ENCODE measurements at regions of chr16 and their contacts with region 1.

Region 1: GRCh38 chr16:82242201-82242600 is 72.2 kb upstream of the MPHOSPH6 start:
- DNase-seq: no peak
- H3K4me3 Mint-ChIP-seq: no peak overlapping the region
- H3K27ac Mint-ChIP-seq: no peak overlapping the region
- H3K4me1 Mint-ChIP-seq: no peaks in the 10 kb centered on the region
- H3K27me3 Mint-ChIP-seq: peaks cover 31% of the 10 kb centered on the region

Region 2: GRCh38 chr16:82229796-82230619 is 12.2 kb before region 1 on chr16:
- CTCF ChIA-PET with region 1: interaction called, 11 read pairs
- POLR2A ChIA-PET with region 1: no interaction called
- DNase-seq: peak; percentile 62
- H3K4me3 Mint-ChIP-seq: no peak overlapping the region
- H3K27ac Mint-ChIP-seq: no peak overlapping the region
- H3K4me1 Mint-ChIP-seq: no peaks in the 10 kb centered on the region
- H3K27me3 Mint-ChIP-seq: peaks cover 8% of the 10 kb centered on the region

Measured in activated CD4-positive, alpha-beta memory T cell treated with anti-CD3 and anti-CD28 coated beads, Interleukin-2, amount 10 ng/mL, durations not matched to agents 7 days and 5 days (primary cell).